Heart right ventricle (tissue), 16 donors: ENCODE measurements at regions of chr11 and their contacts with region 1.

Region 1: DNA sequence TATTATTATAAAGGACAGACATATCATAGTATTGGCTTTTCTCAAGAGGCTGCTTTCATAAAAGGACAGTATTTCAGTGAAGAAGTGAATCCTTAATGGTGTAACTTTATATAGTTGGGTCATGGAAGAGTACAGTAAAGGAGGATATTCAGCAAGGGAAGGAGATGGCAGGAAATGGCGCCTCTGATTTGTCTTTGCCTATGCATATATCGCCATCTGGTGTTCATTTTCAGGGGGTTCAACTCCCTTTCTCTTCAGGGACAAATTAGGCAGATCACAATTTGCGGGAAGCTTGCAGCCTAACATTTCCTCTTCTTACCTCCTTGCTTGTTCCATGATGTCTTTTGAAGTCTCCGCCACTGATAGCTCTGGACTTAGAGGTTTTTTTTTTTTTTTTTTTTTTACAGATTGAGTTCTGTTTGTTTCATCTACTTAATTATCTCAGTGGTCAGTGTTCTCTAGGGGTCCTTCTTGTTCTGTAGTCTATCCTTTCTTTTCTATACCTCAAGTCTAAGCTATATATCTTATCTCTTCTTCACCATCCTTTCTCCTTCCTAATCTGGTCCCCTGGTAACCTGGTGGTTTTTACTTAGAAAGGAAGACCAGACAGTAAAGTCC is 21.8 kb upstream of the RRM1 start:
- DNase-seq: peak in 1 of 2 donors; percentile 69
- ATAC-seq: peak; percentile 68 to 94 (median 88)
- H3K4me3 ChIP-seq: no peak overlapping the region
- H3K27ac ChIP-seq: peak overlapping the region in 2 of 10 donors; percentile 19 to 41
- H3K4me1 ChIP-seq: peaks cover 0 to 27% (median 12%) of the 10 kb centered on the region in 9 donors
- H3K27me3 ChIP-seq: no peaks in the 10 kb centered on the region
- CTCF ChIP-seq: peak; percentile 69 to 91 (median 87)

Region 2: DNA sequence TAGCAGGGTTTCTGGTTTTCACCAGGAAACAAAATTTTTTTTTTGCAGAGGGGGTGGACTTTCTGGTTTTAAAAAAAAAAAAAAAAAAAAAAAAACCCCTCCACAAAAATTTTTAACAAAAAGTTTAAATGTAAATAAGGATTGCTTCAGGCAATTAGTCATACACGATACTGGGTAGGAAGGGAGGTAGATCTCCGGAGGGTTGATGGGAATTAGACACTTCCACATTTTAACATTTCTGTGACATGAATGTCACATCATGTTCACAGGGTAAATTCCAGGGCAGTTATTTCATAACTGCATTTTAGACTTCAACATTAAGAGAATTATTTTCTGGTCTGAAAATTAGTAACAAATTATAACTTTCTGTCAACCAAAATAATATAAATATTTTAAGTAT is 291.4 kb before region 1 on chr11:
- intact Hi-C with region 1: loop called in 1 of 10 experiments (anchors 10 kb)
- DNase-seq: no peak
- ATAC-seq: no peak
- H3K4me3 ChIP-seq: no peak overlapping the region
- H3K27ac ChIP-seq: peak overlapping the region in 1 of 10 donors; percentile 56
- H3K4me1 ChIP-seq: peaks cover 0 to 59% (median 17%) of the 10 kb centered on the region in 9 donors
- H3K27me3 ChIP-seq: no peaks in the 10 kb centered on the region
- CTCF ChIP-seq: no peak

Region 3: GRCh38 chr11:3811011-3811410 is 261.8 kb before region 1 on chr11:
- intact Hi-C with region 1: no loop called
- DNase-seq: peak in 1 of 2 donors; percentile 48
- ATAC-seq: peak; percentile 44 to 79 (median 68)
- H3K4me3 ChIP-seq: no peak overlapping the region
- H3K27ac ChIP-seq: peak overlapping the region in 8 of 10 donors; percentile 13 to 86 (median 76)
- H3K4me1 ChIP-seq: peaks cover 0 to 56% (median 29%) of the 10 kb centered on the region in 9 donors
- H3K27me3 ChIP-seq: no peaks in the 10 kb centered on the region
- CTCF ChIP-seq: no peak

Region 4: GRCh38 chr11:3849297-3849874 is 223.4 kb before region 1 on chr11:
- intact Hi-C with region 1: loop called in 8 of 10 experiments (anchors 1 to 2 kb)
- DNase-seq: peak in 1 of 2 donors; percentile 34
- ATAC-seq: peak in 7 of 8 donors; percentile 55 to 74 (median 62)
- H3K4me3 ChIP-seq: no peak overlapping the region
- H3K27ac ChIP-seq: no peak overlapping the region
- H3K4me1 ChIP-seq: peaks cover 0 to 11% (median 2%) of the 10 kb centered on the region in 9 donors
- H3K27me3 ChIP-seq: peaks cover 0 to 4% (median 0%) of the 10 kb centered on the region in 7 donors
- CTCF ChIP-seq: peak; percentile 49 to 84 (median 71)

Region 5: GRCh38 chr11:3984896-3985295 is 87.9 kb before region 1 on chr11:
- intact Hi-C with region 1: loop called in 1 of 10 experiments (anchors 10 kb)
- DNase-seq: no peak
- ATAC-seq: peak in 5 of 8 donors; percentile 29 to 55 (median 36)
- H3K4me3 ChIP-seq: no peak overlapping the region
- H3K27ac ChIP-seq: no peak overlapping the region
- H3K4me1 ChIP-seq: peaks cover 4 to 65% (median 30%) of the 10 kb centered on the region in 9 donors
- H3K27me3 ChIP-seq: no peaks in the 10 kb centered on the region
- CTCF ChIP-seq: peak in 2 of 9 donors; percentile 26 to 43

Region 6: GRCh38 chr11:4134844-4135243 is 62.1 kb after region 1 on chr11:
- intact Hi-C with region 1: no loop called
- DNase-seq: no peak
- ATAC-seq: no peak
- H3K4me3 ChIP-seq: no peak overlapping the region
- H3K27ac ChIP-seq: no peak overlapping the region
- H3K4me1 ChIP-seq: no peaks in the 10 kb centered on the region
- H3K27me3 ChIP-seq: no peaks in the 10 kb centered on the region
- CTCF ChIP-seq: no peak